ENCODE measurements at regions of chr2 and their contacts with region 1.

Region 1: DNA sequence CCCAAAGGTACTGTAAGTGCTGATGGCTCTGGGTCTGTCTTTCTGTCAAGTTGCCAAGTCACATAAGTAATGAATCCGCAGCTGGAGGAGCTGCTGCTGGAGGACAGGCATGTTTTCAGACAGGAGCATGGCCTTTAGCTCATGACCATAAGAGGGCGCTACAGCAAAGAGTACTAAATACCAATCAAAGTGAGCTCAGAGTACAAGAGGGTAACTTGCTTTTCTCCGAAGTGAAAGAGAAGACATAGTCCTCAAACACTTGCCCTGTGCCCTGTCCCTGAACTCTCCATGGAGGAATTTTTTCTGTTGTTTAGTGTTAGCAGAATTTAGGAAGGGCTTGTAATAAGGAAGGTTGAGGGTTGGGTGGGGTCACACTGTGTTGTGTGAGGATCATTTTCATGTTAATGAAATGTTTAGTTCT is 58.0 kb upstream of the EML6 start:
- DNase-seq: peak in 1 of 2 experiments; percentile 73
- ATAC-seq: peak; percentile 32 to 73; a peak in 4 of 6 replicates
- H3K4me3 ChIP-seq: no peak overlapping the region
- H3K27ac ChIP-seq: peak overlapping the region; percentile 34 to 53; a peak in 5 of 6 replicates
- H3K4me1 ChIP-seq: peaks cover 45% of the 10 kb centered on the region
- CTCF ChIP-seq: peak; percentile 66
- EP300 ChIP-seq: no peak
- POLR2A ChIP-seq: no peak
- RAD21 ChIP-seq: peak; percentile 24 to 42; a peak in 2 of 5 replicates

Region 2: DNA sequence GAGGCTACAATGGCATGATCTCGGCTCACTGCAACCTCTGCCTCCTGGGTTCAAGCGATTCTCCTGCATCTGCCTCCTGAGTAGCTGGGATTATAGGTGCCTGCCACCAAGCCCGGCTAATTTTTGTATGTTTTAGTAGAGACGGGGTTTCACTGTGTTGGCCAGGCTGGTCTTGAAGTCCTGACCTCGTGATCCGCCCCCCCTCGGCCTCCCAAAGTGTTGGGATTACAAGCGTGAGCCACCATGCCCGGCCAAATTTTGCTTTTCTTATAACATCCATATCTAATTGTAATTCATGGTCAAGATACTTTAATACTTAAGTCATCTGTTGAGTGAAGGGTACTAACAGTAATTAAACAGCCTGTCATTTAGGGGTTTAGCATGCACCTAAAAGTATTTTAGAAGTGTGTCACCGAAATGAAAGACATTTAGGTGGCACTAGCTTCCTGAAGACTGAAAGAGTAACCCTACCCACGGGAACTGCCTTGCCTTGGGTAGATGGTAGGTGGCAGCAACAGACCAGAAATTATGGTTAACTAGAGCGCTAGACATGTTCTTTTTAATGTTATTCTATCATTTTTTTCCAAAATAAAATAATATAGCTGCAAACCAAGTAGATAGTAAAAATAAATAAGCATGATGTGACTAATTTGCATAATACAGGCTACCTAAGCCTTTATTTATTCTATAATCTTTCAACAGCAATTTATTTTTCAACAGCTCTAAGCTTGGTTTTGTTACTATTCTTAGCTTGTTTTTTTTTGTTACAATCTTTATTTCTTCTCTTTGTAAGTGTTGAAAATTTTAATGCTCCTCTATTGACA is 558.6 kb before region 1 on chr2:
- CTCF ChIA-PET with region 1: interaction called, 12 read pairs
- POLR2A ChIA-PET with region 1: no interaction called
- DNase-seq: peak; percentile 51 to 72
- ATAC-seq: peak; percentile 83 to 88
- H3K4me3 ChIP-seq: no peak overlapping the region
- H3K27ac ChIP-seq: peak overlapping the region in 1 of 2 experiments; percentile 22; a peak in 1 of 6 replicates
- H3K4me1 ChIP-seq: peaks cover 19% of the 10 kb centered on the region
- CTCF ChIP-seq: peak; percentile 94
- EP300 ChIP-seq: no peak
- POLR2A ChIP-seq: no peak
- RAD21 ChIP-seq: peak; percentile 92 to 94

Region 3: DNA sequence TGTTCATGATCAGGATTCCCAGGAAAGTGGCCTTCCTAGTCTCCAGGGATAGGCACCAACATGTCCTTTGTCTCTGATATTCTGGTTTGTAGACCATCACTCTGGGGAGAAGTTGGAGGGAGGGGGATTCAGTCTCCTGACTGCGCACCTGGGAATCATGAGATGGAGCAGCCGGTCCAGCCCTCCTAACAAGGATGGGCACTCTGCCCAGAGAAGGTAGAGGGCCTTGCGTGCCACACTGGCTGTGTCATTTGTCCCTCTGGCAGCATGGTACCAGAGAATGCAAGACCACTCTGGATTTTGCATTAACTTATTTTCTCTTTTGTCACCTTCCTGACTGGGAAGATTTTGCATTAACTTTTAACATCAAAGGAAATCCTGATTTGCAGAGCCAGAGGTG is 17.2 kb before region 1 on chr2:
- CTCF ChIA-PET with region 1: interaction called, 12 read pairs
- POLR2A ChIA-PET with region 1: no interaction called
- DNase-seq: no peak
- ATAC-seq: no peak
- H3K4me3 ChIP-seq: no peak overlapping the region
- H3K27ac ChIP-seq: no peak overlapping the region
- H3K4me1 ChIP-seq: peaks cover 10% of the 10 kb centered on the region
- CTCF ChIP-seq: no peak
- EP300 ChIP-seq: no peak
- POLR2A ChIP-seq: no peak
- RAD21 ChIP-seq: no peak

Region 4: GRCh38 chr2:54680397-54681041 is 15.1 kb after region 1 on chr2:
- CTCF ChIA-PET with region 1: interaction called, 50 read pairs
- POLR2A ChIA-PET with region 1: interaction called, 3 read pairs
- DNase-seq: no peak
- ATAC-seq: no peak
- H3K4me3 ChIP-seq: no peak overlapping the region
- H3K27ac ChIP-seq: no peak overlapping the region
- H3K4me1 ChIP-seq: no peaks in the 10 kb centered on the region
- CTCF ChIP-seq: no peak
- EP300 ChIP-seq: no peak
- POLR2A ChIP-seq: no peak
- RAD21 ChIP-seq: no peak

Region 5: DNA sequence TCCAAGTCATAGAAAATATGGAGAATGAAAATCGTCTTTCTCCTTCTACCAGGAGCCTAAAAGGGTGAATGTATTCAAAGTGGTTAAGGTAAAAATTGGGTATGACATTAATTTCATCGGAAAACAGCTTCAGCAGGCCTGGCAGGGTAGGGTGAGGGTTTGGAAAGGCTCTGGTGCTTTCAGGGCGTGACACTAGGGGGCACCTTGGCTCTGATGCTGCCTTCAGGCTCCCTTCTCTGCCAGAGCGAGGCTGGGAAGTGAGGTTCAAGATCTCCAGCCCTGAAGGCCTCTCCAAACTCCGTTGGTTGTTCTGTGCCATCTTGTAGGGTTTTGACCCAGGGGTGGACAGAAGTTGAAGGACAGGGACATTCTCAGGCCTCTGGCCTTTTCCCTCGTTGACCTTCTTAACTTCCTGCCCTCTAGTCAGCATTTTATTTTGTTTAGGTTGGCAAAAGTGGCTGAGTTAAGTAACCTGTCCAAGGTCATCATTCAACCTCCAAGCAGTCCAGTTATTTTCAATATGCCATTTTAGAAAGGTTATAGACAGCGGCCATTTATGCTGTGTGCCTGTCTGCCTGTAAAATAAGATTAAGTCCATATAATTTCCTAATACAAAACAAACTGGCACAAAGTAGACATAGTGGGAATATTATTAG is 98.3 kb after region 1 on chr2:
- CTCF ChIA-PET with region 1: no interaction called
- POLR2A ChIA-PET with region 1: no interaction called
- DNase-seq: peak; percentile 18 to 38
- ATAC-seq: peak; percentile 80 to 88
- H3K4me3 ChIP-seq: no peak overlapping the region
- H3K27ac ChIP-seq: no peak overlapping the region
- H3K4me1 ChIP-seq: no peaks in the 10 kb centered on the region
- CTCF ChIP-seq: peak; percentile 47
- EP300 ChIP-seq: no peak
- POLR2A ChIP-seq: no peak
- RAD21 ChIP-seq: peak; percentile 58 to 68

Measured in A549 (cell line).